HepG2 (cell line): ENCODE measurements at regions of chr19 and their contacts with region 1.

Region 1: DNA sequence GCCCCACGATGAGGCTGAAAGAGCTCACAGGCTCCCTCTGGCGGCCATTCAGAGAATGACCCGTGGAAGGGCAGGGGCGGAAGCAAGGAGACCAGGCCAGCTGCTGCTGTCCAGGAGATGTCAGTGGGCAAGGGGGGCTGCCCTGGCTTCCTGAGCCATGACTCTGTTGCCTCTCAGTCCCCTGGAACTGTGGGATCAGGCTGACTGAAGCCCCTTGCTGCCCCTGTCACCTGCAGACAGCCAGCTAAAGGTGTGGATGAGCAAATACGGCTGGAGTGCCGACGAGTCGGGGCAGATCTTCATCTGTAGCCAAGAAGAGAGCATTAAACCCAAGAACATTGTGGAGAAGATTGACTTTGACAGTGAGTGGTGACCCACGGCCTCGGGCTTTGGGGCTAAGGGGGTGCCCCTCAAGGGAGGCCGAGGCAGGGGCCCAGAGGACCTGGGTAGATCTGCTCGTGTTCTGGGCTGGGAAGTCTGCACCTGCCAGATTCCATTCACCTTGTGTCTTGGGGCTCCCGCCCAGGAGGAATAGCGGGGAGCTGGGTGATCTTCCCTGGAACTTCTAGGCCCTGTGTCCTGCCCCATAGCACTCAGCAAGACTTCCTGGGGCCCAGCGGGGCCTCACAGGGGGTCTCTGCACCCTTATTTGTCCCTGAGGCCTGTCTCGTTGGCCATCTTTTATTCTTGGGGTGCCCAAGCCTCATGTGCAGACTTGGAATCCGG is 12.5 kb upstream of the ACTN4 start:
- DNase-seq: no peak
- ATAC-seq: peak; percentile 62
- H3K4me3 ChIP-seq: no peak overlapping the region
- H3K27ac ChIP-seq: no peak overlapping the region
- H3K4me1 ChIP-seq: peaks cover 18% of the 10 kb centered on the region
- H3K27me3 ChIP-seq: no peaks in the 10 kb centered on the region
- CTCF ChIP-seq: peak; percentile 86
- EP300 ChIP-seq: no peak
- POLR2A ChIP-seq: no peak
- RAD21 ChIP-seq: peak; percentile 49; the same call in 1 of the 2 replicates

Region 2: GRCh38 chr19:38402967-38403861 is 231.7 kb before region 1 on chr19 and contains the start of gene FAM98C:
- CTCF ChIA-PET with region 1: interaction called, 4 read pairs
- POLR2A ChIA-PET with region 1: interaction called, 11 read pairs
- in situ Hi-C with region 1: no loop called
- intact Hi-C with region 1: loop called (anchors 5 kb)
- DNase-seq: peak; percentile 93
- ATAC-seq: peak; percentile 96
- H3K4me3 ChIP-seq: peak within 1 kb of the TSS; percentile 57 to 86 (median 80); a peak in 5 of 6 replicates
- H3K27ac ChIP-seq: peak within 1 kb of the TSS; percentile 55
- H3K4me1 ChIP-seq: no peaks in the 10 kb centered on the region
- H3K27me3 ChIP-seq: peaks cover 5 to 17% of the 10 kb centered on the region in 2 experiments; a peak in 3 of 5 replicates
- CTCF ChIP-seq: peak; percentile 97
- EP300 ChIP-seq: no peak
- POLR2A ChIP-seq: peak; percentile 58 to 62; a peak in 3 of 4 replicates
- RAD21 ChIP-seq: peak; percentile 94
- total RNA-seq, gene FAM98C: 7.4 and 10.0 TPM in 2 replicates

Region 3: DNA sequence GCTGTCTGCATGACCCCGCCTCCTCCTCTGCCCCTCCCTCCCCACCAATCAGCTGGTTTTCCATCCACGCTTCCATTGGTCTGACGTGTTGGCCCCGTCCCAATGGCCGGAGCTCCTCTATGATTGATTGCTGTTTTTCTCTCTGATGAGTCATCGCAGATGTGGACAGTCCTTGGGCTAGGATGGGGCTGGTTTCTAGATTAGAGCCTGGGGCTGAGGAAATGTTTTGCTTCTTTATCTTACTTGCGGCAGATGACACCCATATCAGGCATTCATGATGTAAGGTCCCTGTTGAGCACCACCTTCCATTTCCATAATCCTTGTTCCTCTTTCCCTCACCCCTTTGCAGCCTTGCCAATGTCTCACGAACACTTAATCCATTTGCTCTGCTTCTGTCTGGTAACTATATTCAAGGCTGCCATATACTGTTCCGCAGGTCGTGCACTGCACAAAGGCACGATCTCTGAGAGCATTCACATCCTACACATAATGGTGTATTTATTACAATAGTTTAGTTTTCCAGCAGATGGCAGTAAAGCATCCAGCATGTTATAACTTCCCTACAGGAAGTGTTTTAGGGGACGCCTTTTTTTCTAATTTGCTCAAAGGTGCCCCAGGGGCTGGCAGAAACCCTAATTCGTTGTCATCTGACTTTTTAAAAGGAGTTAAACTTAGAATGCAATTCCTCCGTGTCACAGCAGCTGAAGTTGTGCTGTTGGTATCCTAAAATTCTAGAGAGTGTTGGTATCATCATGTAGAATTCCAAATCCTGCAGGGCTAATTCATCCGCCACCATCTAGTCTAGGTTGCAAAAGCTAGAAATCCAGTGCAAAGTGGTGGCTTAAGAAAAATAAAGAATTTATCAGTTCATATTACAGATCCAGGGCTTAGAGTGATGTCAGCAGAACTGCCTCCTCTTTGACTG is 90.6 kb before region 1 on chr19:
- CTCF ChIA-PET with region 1: interaction called, 13 read pairs
- POLR2A ChIA-PET with region 1: no interaction called
- in situ Hi-C with region 1: loop called (anchors 10 kb)
- intact Hi-C with region 1: loop called (anchors 1 kb)
- DNase-seq: peak; percentile 79
- ATAC-seq: peak; percentile 90
- H3K4me3 ChIP-seq: peak overlapping the region in 1 of 3 experiments; percentile 58; a peak in 2 of 6 replicates
- H3K27ac ChIP-seq: no peak overlapping the region
- H3K4me1 ChIP-seq: peaks cover 19% of the 10 kb centered on the region
- H3K27me3 ChIP-seq: peaks cover 0 to 5% of the 10 kb centered on the region in 2 experiments; a peak in 2 of 5 replicates
- CTCF ChIP-seq: peak; percentile 75
- EP300 ChIP-seq: no peak
- POLR2A ChIP-seq: no peak
- RAD21 ChIP-seq: peak; percentile 54; the same call in 1 of the 2 replicates

Region 4: DNA sequence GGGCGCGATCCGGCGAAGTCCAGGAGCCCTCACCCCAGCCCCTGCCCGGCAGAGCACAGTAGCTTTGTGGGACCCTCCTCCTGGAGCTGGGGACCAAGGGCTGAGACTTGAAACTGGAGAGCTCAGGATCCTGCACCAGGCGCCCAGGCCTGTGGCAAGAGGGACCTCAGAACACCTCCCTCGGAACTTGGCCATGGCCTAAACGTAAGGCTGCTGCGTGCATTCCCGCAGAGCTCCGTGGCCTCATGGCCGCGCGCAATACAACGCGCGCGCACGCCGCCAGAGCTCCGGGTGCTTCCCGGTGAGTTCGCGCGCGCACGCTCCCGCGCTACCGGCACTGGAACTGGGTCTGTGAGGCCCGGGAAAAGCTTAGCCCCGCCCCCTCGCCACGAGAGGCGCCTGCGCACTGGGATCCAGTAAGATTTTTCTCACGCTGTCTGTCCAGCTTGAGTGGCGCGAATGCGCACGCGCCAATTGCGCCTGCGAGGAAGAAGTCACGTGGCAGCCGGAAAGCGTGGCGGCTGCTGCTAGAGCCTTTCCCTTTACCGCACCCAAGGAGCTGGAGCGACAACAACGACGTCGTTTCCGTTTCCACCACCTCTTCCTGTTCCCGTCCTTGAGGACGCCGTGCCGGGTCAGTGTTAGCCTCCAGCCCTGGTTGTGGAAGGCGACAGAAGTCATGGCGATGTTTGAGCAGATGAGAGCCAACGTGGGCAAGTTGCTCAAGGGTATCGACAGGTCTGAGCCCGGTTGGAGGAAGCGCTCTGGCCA is 16.1 kb before region 1 on chr19 and contains the start of gene EIF3K:
- CTCF ChIA-PET with region 1: no interaction called
- POLR2A ChIA-PET with region 1: interaction called, 16 read pairs
- in situ Hi-C with region 1: no loop called
- intact Hi-C with region 1: no loop called
- DNase-seq: peak; percentile 97
- ATAC-seq: peak; percentile 91
- H3K4me3 ChIP-seq: peak within 1 kb of the TSS; percentile 92 to 95 (median 94)
- H3K27ac ChIP-seq: peak within 1 kb of the TSS; percentile 66
- H3K4me1 ChIP-seq: peaks cover 36% of the 10 kb centered on the region
- H3K27me3 ChIP-seq: no peaks in the 10 kb centered on the region; a peak in 2 of 5 replicates
- CTCF ChIP-seq: no peak
- EP300 ChIP-seq: no peak
- POLR2A ChIP-seq: peak; percentile 76 to 88
- RAD21 ChIP-seq: no peak
- total RNA-seq, gene EIF3K: 258 and 351 TPM in 2 replicates